CD4-positive, alpha-beta memory T cell (primary cell): ENCODE measurements at regions of chr13 and their contacts with region 1.

Region 1: GRCh38 chr13:98484289-98485219 is 92.4 kb downstream of the STK24 start:
- DNase-seq: peak; percentile 59 to 93 (median 67)
- H3K4me3 ChIP-seq: no peak overlapping the region
- H3K4me3 Mint-ChIP-seq: peak overlapping the region; percentile 3 to 88 (median 80)
- H3K27ac ChIP-seq: peak overlapping the region; percentile 50
- H3K27ac Mint-ChIP-seq: peak overlapping the region; percentile 90 to 98 (median 95)
- H3K4me1 ChIP-seq: peaks cover 94% of the 10 kb centered on the region
- H3K4me1 Mint-ChIP-seq: peaks cover 64 to 93% (median 82%) of the 10 kb centered on the region in 4 donors
- H3K27me3 ChIP-seq: no peaks in the 10 kb centered on the region
- H3K27me3 Mint-ChIP-seq: no peaks in the 10 kb centered on the region

Region 2: GRCh38 chr13:98466634-98467236 is 17.8 kb before region 1 on chr13:
- CTCF ChIA-PET with region 1: interaction called, 10 read pairs
- POLR2A ChIA-PET with region 1: no interaction called
- intact Hi-C with region 1: no loop called
- DNase-seq: peak in 1 of 5 donors; percentile 24
- H3K4me3 ChIP-seq: no peak overlapping the region
- H3K4me3 Mint-ChIP-seq: no peak overlapping the region
- H3K27ac ChIP-seq: no peak overlapping the region
- H3K27ac Mint-ChIP-seq: peak overlapping the region in 6 of 7 donors; percentile 47 to 73 (median 58)
- H3K4me1 ChIP-seq: no peaks in the 10 kb centered on the region
- H3K4me1 Mint-ChIP-seq: peaks cover 16 to 35% (median 25%) of the 10 kb centered on the region in 4 donors
- H3K27me3 ChIP-seq: no peaks in the 10 kb centered on the region
- H3K27me3 Mint-ChIP-seq: no peaks in the 10 kb centered on the region

Region 3: GRCh38 chr13:98570929-98571372 is 86.4 kb after region 1 on chr13:
- CTCF ChIA-PET with region 1: interaction called, 7 read pairs
- POLR2A ChIA-PET with region 1: interaction called, 11 read pairs
- intact Hi-C with region 1: no loop called
- DNase-seq: peak; percentile 50 to 75 (median 61)
- H3K4me3 ChIP-seq: peak overlapping the region; percentile 77 to 90
- H3K4me3 Mint-ChIP-seq: peak overlapping the region; percentile 86 to 97 (median 94)
- H3K27ac ChIP-seq: peak overlapping the region; percentile 81
- H3K27ac Mint-ChIP-seq: peak overlapping the region; percentile 95 to 98 (median 98)
- H3K4me1 ChIP-seq: peaks cover 96% of the 10 kb centered on the region
- H3K4me1 Mint-ChIP-seq: peaks cover 70 to 99% (median 85%) of the 10 kb centered on the region in 4 donors
- H3K27me3 ChIP-seq: no peaks in the 10 kb centered on the region
- H3K27me3 Mint-ChIP-seq: no peaks in the 10 kb centered on the region